GM10248 (cell line): ENCODE measurements at regions of chr22 and their contacts with region 1.

Region 1: DNA sequence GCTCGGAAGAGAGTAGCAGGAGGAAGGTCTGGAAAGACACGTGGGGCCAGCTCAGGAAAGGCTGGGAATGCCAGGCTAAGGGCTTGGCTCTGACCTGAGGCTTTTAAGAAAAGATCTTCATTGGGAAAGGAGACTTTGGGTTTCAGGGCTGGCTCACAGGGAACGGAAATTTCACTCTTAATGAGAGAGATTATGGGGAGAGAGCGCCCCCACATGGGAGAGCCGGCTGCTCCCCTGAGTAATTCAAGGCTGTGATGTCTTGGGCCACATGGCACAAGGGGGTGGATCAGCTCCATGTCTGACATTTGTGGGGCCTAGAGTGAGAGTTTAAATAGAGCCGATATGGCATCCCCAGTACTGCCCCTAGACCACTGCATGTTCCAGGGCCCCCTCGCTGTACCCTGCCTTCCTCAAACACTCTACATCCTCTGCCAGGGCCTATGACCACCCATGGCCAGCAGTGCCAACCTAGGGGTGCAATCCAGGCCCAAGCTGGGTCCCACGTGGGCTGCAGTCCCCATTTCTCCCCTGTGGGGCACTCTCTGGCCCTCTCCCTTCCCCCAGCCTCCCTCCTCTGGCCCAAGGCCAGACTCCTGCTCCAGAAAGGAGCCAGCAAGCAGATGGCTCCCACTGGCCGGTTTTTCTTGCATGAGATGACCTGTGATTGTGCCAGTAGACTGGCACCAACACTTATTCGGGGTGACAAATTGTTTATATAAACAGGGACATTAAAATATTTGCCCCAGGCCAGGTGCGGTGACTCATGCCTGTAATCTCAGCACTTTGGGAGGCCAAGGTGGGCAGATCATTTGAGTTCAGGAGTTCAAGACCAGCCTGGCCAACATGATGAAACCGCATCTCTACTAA is 75.2 kb downstream of the ISX start:
- DNase-seq: peak; percentile 63
- CTCF ChIP-seq: peak; percentile 57

Region 2: GRCh38 chr22:34414484-34415440 is 726.4 kb before region 1 on chr22:
- CTCF ChIA-PET with region 1: interaction called, 10 read pairs
- POLR2A ChIA-PET with region 1: no interaction called
- DNase-seq: peak; percentile 16
- CTCF ChIP-seq: peak; percentile 72

Region 3: GRCh38 chr22:34973926-34974325 is 167.2 kb before region 1 on chr22:
- CTCF ChIA-PET with region 1: no interaction called
- POLR2A ChIA-PET with region 1: interaction called, 10 read pairs
- DNase-seq: no peak
- CTCF ChIP-seq: no peak

Region 4: DNA sequence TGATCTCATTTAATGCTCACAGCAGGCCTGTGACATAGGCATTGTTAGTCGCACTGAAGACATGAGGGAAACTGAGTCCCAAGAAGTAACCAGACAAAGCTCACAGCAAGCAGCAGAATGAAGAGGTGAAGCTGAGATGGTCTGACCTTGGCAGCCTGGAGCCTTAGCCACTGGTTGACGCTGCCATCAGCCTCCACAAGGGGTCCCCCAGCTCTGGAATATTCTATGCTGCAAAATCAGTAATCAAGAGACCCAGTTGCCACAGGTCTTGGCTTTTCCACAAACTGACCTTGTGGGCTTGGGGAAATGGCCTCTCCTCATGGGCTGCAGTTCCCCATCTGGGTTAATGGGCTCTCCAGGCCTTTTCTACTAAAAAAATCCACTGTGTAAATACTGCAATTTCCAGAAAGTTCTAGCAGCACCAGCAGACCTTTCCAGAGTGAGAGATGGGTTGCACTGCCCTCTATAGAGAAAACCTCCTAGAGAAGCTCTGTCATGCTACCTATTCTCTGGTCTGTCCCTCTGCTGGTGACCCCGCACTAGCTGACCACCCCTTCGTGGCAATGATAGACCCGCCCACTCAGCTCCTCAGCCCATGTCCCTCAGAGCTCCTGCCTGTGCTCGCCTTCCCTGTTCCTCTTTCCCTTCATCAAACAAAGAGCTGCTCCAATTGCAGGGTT is 97.7 kb before region 1 on chr22:
- CTCF ChIA-PET with region 1: interaction called, 39 read pairs
- POLR2A ChIA-PET with region 1: no interaction called
- DNase-seq: peak; percentile 39
- CTCF ChIP-seq: peak; percentile 59

Region 5: GRCh38 chr22:35128637-35129036 is 12.5 kb before region 1 on chr22:
- CTCF ChIA-PET with region 1: interaction called, 73 read pairs
- POLR2A ChIA-PET with region 1: interaction called, 6 read pairs
- DNase-seq: peak; percentile 68
- CTCF ChIP-seq: no peak